Naive thymus-derived CD4-positive, alpha-beta T cell (primary cell): ENCODE measurements at regions of chr6 and their contacts with region 1.

Region 1: DNA sequence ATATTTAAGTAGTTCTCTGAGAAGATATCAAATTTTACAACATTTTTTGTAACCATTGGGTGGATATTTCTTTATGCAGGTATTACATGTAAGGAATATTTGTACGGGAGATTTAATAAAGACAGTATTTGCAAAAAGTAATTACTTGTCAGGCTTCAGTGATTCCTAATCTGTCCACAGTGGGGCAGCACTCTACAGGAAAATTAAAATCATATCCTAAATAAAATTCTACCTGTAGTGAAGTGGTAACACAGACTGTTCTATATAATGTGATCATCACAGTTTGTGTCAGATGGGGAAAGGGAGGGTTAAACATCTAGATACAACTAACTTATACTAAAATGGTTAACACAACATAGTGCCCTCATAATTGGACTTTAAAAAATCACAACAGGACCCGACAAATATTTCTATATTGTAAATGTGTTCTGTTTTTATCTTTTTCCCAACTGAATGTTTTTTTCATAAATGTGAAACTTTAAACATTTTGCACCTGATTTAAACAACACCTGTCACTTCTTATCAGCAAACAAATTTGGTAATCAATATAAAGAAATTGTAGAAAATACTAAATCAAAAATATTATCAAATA is 145.6 kb upstream of the MANEA start:
- DNase-seq: peak in 6 of 9 donors; percentile 1 to 24 (median 20)
- ATAC-seq: no peak
- H3K4me3 ChIP-seq: no peak overlapping the region
- H3K4me3 Mint-ChIP-seq: no peak overlapping the region
- H3K27ac ChIP-seq: no peak overlapping the region
- H3K27ac Mint-ChIP-seq: no peak overlapping the region
- H3K4me1 ChIP-seq: no peaks in the 10 kb centered on the region
- H3K4me1 Mint-ChIP-seq: no peaks in the 10 kb centered on the region
- H3K27me3 ChIP-seq: peaks cover 0 to under 1% of the 10 kb centered on the region in 2 donors
- H3K27me3 Mint-ChIP-seq: peaks cover 0 to 5% (median 0%) of the 10 kb centered on the region in 5 donors

Region 2: DNA sequence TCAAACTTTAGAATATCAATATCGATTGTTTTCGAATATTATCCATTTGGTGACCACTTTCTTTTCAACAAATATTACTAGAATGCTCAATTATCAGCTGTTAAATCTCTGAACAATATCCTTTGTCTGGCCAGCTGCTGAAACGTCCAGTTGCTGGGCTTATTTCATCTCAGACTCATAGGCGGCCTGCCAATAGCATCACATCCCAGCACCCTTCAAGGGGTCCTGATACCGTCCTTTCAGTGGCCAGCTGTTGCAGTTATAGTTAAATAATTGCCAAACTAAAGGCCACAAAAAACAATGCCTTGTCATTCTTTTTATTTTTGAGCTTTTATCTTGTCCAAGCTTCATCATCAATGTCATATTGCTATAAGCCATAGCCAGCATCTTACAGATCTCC is 861.2 kb before region 1 on chr6:
- CTCF ChIA-PET with region 1: no interaction called
- POLR2A ChIA-PET with region 1: no interaction called
- intact Hi-C with region 1: no loop called
- DNase-seq: no peak
- ATAC-seq: no peak
- H3K4me3 ChIP-seq: no peak overlapping the region
- H3K4me3 Mint-ChIP-seq: no peak overlapping the region
- H3K27ac ChIP-seq: no peak overlapping the region
- H3K27ac Mint-ChIP-seq: no peak overlapping the region
- H3K4me1 ChIP-seq: no peaks in the 10 kb centered on the region
- H3K4me1 Mint-ChIP-seq: no peaks in the 10 kb centered on the region
- H3K27me3 ChIP-seq: no peaks in the 10 kb centered on the region
- H3K27me3 Mint-ChIP-seq: no peaks in the 10 kb centered on the region

Region 3: GRCh38 chr6:95629551-95629950 is 197.8 kb after region 1 on chr6:
- CTCF ChIA-PET with region 1: no interaction called
- POLR2A ChIA-PET with region 1: no interaction called
- intact Hi-C with region 1: no loop called
- DNase-seq: no peak
- ATAC-seq: no peak
- H3K4me3 ChIP-seq: no peak overlapping the region
- H3K4me3 Mint-ChIP-seq: no peak overlapping the region
- H3K27ac ChIP-seq: no peak overlapping the region
- H3K27ac Mint-ChIP-seq: no peak overlapping the region
- H3K4me1 ChIP-seq: no peaks in the 10 kb centered on the region
- H3K4me1 Mint-ChIP-seq: no peaks in the 10 kb centered on the region
- H3K27me3 ChIP-seq: peaks cover 0 to 3% of the 10 kb centered on the region in 2 donors
- H3K27me3 Mint-ChIP-seq: peaks cover 0 to 14% (median 3%) of the 10 kb centered on the region in 5 donors

Region 4: GRCh38 chr6:95685822-95686221 is 254.1 kb after region 1 on chr6:
- CTCF ChIA-PET with region 1: no interaction called
- POLR2A ChIA-PET with region 1: no interaction called
- intact Hi-C with region 1: loop called in 1 of 2 experiments (anchors 10 kb)
- DNase-seq: no peak
- ATAC-seq: no peak
- H3K4me3 ChIP-seq: no peak overlapping the region
- H3K4me3 Mint-ChIP-seq: no peak overlapping the region
- H3K27ac ChIP-seq: no peak overlapping the region
- H3K27ac Mint-ChIP-seq: no peak overlapping the region
- H3K4me1 ChIP-seq: no peaks in the 10 kb centered on the region
- H3K4me1 Mint-ChIP-seq: peaks cover 0 to 2% (median 0%) of the 10 kb centered on the region in 7 donors
- H3K27me3 ChIP-seq: no peaks in the 10 kb centered on the region
- H3K27me3 Mint-ChIP-seq: peaks cover 0 to under 1% (median 0%) of the 10 kb centered on the region in 5 donors

Region 5: GRCh38 chr6:95866732-95867131 is 435.0 kb after region 1 on chr6:
- CTCF ChIA-PET with region 1: no interaction called
- POLR2A ChIA-PET with region 1: no interaction called
- intact Hi-C with region 1: loop called (anchors 1 to 2 kb)
- DNase-seq: no peak
- ATAC-seq: no peak
- H3K4me3 ChIP-seq: no peak overlapping the region
- H3K4me3 Mint-ChIP-seq: no peak overlapping the region
- H3K27ac ChIP-seq: no peak overlapping the region
- H3K27ac Mint-ChIP-seq: no peak overlapping the region
- H3K4me1 ChIP-seq: no peaks in the 10 kb centered on the region
- H3K4me1 Mint-ChIP-seq: no peaks in the 10 kb centered on the region
- H3K27me3 ChIP-seq: no peaks in the 10 kb centered on the region
- H3K27me3 Mint-ChIP-seq: no peaks in the 10 kb centered on the region

Region 6: GRCh38 chr6:96521644-96522464 is 1090.1 kb after region 1 on chr6 and contains the start of gene UFL1:
- CTCF ChIA-PET with region 1: no interaction called
- POLR2A ChIA-PET with region 1: no interaction called
- intact Hi-C with region 1: loop called in 1 of 2 experiments (anchors 10 kb)
- DNase-seq: peak; percentile 84 to 97 (median 93)
- ATAC-seq: peak; percentile 97
- H3K4me3 ChIP-seq: peak within 1 kb of the TSS; percentile 98
- H3K4me3 Mint-ChIP-seq: peak within 1 kb of the TSS; percentile 96 to 100 (median 98)
- H3K27ac ChIP-seq: peak within 1 kb of the TSS; percentile 98
- H3K27ac Mint-ChIP-seq: peak within 1 kb of the TSS; percentile 98 to 100 (median 100)
- H3K4me1 ChIP-seq: peaks cover 13 to 19% of the 10 kb centered on the region in 2 donors
- H3K4me1 Mint-ChIP-seq: peaks cover 11 to 49% (median 35%) of the 10 kb centered on the region in 7 donors
- H3K27me3 ChIP-seq: no peaks in the 10 kb centered on the region
- H3K27me3 Mint-ChIP-seq: no peaks in the 10 kb centered on the region
- total RNA-seq, gene UFL1: 15.0 to 34.9 (median 22.2) TPM